ENCODE measurements at regions of chr11 and their contacts with region 1.

Region 1: DNA sequence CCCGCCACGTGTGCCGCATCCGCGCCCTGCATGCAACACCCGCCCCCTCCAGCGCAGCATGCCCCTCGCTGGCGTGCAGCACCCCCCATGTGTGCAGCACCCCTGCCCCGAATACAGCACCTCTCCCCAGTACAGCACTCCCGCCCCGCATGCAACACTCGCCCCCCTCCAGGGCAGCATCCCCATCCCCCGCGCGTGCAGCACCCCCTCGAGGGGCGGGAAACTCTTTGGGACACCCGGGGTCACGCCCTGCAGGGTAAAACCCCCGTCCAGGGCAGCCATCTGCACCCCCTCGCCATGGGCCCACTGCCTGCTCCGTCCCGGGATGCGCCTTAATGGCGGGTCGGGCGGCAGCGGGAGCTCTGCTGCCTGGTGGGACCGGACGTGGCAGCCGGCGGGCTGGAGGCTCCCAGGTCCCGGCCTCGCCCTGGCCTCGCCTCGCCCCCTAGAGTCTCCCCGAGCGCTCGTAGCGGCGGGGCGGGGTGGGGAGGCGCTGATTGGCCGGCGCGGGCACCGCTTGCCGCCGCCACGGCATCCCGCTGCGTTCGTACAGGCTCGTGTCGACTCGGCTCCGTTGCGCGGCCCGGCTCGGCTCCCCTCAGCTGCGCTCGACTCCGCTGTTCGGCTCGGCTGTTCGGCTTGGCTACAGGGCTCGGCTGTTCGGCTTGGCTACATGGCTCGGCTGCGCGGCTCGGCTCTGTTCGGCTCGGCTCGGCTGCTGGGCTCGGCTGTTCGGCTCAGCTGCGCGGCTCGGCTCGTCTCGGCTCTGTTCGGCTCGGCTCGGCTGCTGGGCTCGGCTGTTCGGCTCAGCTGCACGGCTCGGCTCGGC is 417 bp upstream of the BRSK2 start:
- DNase-seq: peak; percentile 90 to 98
- H3K4me3 ChIP-seq: peak overlapping the region; percentile 47
- H3K4me1 ChIP-seq: peaks cover 11% of the 10 kb centered on the region; the same call in 1 of the 2 replicates
- H3K27me3 ChIP-seq: no peaks in the 10 kb centered on the region

Region 2: DNA sequence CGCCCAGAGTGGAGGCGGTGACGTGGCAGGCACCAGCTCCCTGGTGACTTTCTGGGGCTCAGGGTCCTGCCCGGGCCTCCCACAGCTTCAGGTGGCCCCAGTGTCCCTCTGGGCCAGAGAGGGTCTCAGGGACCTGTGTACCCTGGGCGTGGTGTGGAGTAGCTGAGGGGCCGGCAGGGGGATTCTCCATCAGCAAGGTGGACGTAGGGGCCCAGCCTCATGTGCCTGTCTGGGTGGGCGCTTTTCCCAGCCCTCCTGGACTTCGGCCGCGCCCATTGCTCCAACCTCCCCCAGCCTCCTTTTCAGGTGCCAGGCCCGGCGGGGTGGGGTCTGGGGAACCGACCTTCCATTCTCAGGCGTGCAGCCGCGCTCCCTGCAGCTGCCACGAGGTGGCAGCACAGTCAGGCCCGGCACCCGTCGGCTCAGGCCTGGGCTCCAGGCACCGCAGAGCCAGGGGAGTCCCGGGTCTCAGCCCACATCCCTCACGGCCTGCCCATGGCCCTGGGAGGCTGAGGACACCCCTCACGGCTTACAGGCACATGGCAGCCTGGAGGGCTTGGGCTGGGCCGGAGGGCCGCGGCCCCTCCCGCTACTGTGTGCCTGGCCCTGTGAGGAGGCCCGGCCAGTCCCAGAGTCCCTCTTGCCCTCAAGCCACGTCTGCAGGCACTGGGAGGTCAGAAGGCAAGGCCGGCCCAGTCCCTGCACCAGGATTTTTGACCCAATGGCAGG is 186.4 kb before region 1 on chr11:
- in situ Hi-C with region 1: no loop called
- DNase-seq: peak; percentile 48 to 81
- H3K4me3 ChIP-seq: no peak overlapping the region
- H3K4me1 ChIP-seq: no peaks in the 10 kb centered on the region
- H3K27me3 ChIP-seq: peaks cover 19% of the 10 kb centered on the region; the same call in 1 of the 2 replicates

Region 3: DNA sequence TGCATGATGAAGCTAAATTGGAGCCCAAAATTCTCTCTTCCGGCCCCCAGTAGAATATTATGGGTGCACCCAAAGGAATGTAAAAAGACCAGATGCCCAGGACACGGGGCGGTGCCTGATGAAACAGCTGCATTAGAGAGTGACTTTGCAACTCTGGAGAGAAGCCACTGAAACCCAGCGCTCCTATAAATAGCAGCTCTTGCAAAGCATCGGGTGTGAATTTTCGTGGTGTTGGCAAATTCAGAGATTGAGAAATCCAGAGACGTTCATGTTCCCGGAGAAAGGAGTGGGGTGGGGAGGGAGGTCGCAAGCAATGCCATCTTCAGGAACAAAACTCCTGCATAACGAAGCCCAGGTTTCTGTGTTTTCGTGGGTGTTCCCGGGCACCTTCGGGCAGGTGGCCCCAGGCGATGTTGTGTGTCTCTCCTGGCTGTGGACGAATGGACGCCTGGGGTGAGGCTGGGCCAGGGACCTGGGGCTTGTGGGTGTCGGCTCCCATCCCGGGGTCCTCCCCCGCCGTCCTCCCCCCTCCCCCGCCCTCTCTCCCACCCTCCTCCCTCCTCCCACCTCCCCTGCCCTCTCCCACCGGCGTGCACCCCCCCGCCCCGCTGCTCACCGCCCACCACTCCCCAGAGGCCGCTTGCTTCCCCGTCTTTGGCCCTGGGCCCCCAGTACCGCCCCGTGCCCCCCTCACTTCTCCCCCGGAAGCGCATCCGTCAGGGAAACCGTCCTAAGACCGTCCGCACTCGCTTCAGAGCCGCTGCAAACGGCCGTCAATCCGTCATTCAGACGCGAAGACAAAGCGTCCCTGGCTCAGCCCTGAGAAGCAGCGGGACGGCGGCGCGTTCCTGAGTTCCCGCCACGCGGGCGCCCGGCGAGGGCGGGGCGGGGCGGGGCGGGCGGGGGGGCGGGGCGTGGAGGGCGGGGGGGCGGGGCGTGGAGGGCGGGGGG is 53.2 kb before region 1 on chr11:
- in situ Hi-C with region 1: loop called (anchors 10 kb)
- DNase-seq: peak; percentile 43 to 84
- H3K4me3 ChIP-seq: peak overlapping the region; percentile 19
- H3K4me1 ChIP-seq: peaks cover 6% of the 10 kb centered on the region
- H3K27me3 ChIP-seq: no peaks in the 10 kb centered on the region

Measured in HAP-1 (cell line).